Activated CD8-positive, alpha-beta T cell treated with anti-CD3 and anti-CD28 coated beads for 36 hours (primary cell): ENCODE measurements at regions of chr13 and their contacts with region 1.

Region 1: GRCh38 chr13:102596147-102597028 is at the start of gene TPP2:
- DNase-seq: peak; percentile 99
- ATAC-seq: peak; percentile 90
- H3K4me3 Mint-ChIP-seq: peak within 1 kb of the TSS; percentile 99
- H3K27ac Mint-ChIP-seq: peak within 1 kb of the TSS; percentile 100
- H3K4me1 Mint-ChIP-seq: peaks cover 57% of the 10 kb centered on the region
- H3K27me3 Mint-ChIP-seq: no peaks in the 10 kb centered on the region
- CTCF ChIP-seq: no peak
- total RNA-seq, gene TPP2: 70.3 to 70.8 TPM

Region 2: GRCh38 chr13:102460801-102461200 is 135.6 kb before region 1 on chr13:
- CTCF ChIA-PET with region 1: no interaction called
- POLR2A ChIA-PET with region 1: no interaction called
- intact Hi-C with region 1: no loop called
- DNase-seq: no peak
- ATAC-seq: no peak
- H3K4me3 Mint-ChIP-seq: no peak overlapping the region
- H3K27ac Mint-ChIP-seq: no peak overlapping the region
- H3K4me1 Mint-ChIP-seq: peaks cover 7% of the 10 kb centered on the region
- H3K27me3 Mint-ChIP-seq: peaks cover 8% of the 10 kb centered on the region
- CTCF ChIP-seq: no peak

Region 3: GRCh38 chr13:102484329-102484728 is 112.1 kb before region 1 on chr13:
- CTCF ChIA-PET with region 1: no interaction called
- POLR2A ChIA-PET with region 1: no interaction called
- intact Hi-C with region 1: no loop called
- DNase-seq: no peak
- ATAC-seq: no peak
- H3K4me3 Mint-ChIP-seq: no peak overlapping the region
- H3K27ac Mint-ChIP-seq: no peak overlapping the region
- H3K4me1 Mint-ChIP-seq: no peaks in the 10 kb centered on the region
- H3K27me3 Mint-ChIP-seq: peaks cover 4% of the 10 kb centered on the region
- CTCF ChIP-seq: no peak

Region 4: DNA sequence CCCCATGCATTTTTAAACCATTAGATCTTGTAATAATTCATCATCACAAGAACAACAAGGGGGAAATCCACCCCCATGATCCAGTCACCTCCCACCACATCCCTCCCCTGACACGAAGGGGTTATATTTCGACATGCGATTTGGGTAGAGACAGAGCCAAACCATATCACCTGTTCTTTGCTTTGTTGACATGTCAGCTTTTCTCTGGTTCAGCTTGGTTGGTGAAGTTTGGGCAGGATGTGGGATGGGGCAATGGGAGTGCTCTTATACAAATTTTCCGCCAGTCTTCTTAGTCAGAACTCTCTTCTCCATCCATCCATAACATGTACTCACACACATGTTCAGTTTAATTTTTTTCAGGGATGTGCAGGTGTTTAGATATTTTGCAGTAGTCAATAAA is 13.3 kb after region 1 on chr13:
- CTCF ChIA-PET with region 1: interaction called, 11 read pairs
- POLR2A ChIA-PET with region 1: interaction called, 22 read pairs
- intact Hi-C with region 1: no loop called
- DNase-seq: peak; percentile 45
- ATAC-seq: peak; percentile 68
- H3K4me3 Mint-ChIP-seq: no peak overlapping the region
- H3K27ac Mint-ChIP-seq: peak overlapping the region; percentile 76
- H3K4me1 Mint-ChIP-seq: peaks cover 52% of the 10 kb centered on the region
- H3K27me3 Mint-ChIP-seq: no peaks in the 10 kb centered on the region
- CTCF ChIP-seq: no peak

Region 5: GRCh38 chr13:102657630-102658029 is 61.2 kb after region 1 on chr13:
- CTCF ChIA-PET with region 1: interaction called, 10 read pairs
- POLR2A ChIA-PET with region 1: no interaction called
- intact Hi-C with region 1: no loop called
- DNase-seq: no peak
- ATAC-seq: no peak
- H3K4me3 Mint-ChIP-seq: no peak overlapping the region
- H3K27ac Mint-ChIP-seq: no peak overlapping the region
- H3K4me1 Mint-ChIP-seq: no peaks in the 10 kb centered on the region
- H3K27me3 Mint-ChIP-seq: no peaks in the 10 kb centered on the region
- CTCF ChIP-seq: peak; percentile 55

Region 6: DNA sequence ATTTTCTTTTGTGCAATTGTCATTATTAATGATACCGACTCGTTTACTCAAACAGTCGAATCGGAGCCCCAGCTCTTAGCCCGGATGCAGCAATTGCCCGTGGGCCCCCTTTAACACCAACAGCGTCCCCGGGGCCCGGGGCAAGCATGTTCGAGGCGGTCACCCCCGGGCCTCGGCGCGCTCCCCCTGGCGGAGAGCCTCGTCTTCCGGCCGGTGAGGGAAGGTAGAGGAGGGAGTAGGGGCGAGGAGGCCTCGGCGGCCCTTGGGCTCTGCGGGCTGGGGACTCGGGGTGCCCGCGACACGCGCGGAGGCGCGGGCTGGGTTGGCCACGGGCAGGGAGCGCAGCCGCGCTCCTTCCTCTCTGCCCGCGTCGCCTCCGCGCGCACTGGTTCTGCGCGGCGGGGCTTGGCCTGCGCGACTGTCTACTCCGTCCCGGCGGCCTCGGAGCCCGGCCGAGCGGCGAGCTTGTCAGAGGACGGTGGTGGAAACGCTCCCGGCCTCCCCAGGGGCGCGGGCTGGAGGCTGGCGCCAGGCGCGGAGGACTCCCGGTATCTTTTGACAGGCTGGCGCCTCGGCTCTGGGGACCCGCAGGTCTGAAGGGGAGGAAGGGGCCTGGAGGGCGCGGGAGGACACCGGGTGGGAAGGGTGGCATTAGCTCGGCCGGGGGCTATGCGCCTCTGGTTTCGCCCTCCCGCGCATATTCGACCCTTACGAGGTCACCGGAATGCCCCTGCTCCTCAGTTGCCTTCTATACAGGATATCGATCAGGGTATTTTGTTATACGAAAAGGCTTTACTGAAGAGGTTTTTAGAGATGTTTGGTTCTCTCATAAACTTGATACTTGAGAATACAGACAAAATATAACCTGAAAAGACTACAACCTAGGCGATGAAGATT is 204.0 kb after region 1 on chr13:
- CTCF ChIA-PET with region 1: interaction called, 8 read pairs
- POLR2A ChIA-PET with region 1: interaction called, 11 read pairs
- intact Hi-C with region 1: loop called (anchors 5 kb)
- DNase-seq: peak; percentile 90
- ATAC-seq: peak; percentile 81
- H3K4me3 Mint-ChIP-seq: peak overlapping the region; percentile 92
- H3K27ac Mint-ChIP-seq: peak overlapping the region; percentile 81
- H3K4me1 Mint-ChIP-seq: peaks cover 23% of the 10 kb centered on the region
- H3K27me3 Mint-ChIP-seq: peaks cover 8% of the 10 kb centered on the region
- CTCF ChIP-seq: peak; percentile 83